ENCODE measurements at regions of chr1 and their contacts with region 1.

Region 1: GRCh38 chr1:145858894-145859490 is at the start of gene PIAS3:
- DNase-seq: peak; percentile 95
- H3K4me3 ChIP-seq: peak within 1 kb of the TSS; percentile 84
- H3K27ac ChIP-seq: peak within 1 kb of the TSS; percentile 68
- H3K4me1 ChIP-seq: peaks cover 13% of the 10 kb centered on the region
- CTCF ChIP-seq: no peak
- total RNA-seq, gene PIAS3: 7.8 and 9.4 TPM in 2 replicates

Region 2: DNA sequence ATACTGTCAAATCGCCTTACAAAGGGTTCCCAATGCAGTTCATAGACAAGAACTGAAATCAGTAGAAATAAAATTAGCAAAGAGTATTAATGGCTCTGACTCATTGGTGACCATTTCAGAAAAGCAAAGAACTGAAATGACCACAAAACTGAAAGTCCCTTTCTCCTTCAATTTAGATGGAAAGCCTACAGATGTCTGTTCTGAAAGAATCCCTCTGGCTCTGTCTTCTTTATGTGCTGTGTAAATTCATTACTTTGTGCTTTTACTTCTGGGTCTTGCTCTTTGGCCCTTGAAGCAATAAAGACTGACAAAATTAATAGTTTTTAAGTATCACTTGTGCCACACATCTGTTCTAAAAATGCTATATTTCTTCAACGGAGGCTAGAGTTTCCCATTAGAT is 313.9 kb before region 1 on chr1:
- CTCF ChIA-PET with region 1: no interaction called
- POLR2A ChIA-PET with region 1: no interaction called
- intact Hi-C with region 1: no loop called
- DNase-seq: no peak
- H3K4me3 ChIP-seq: no peak overlapping the region
- H3K27ac ChIP-seq: no peak overlapping the region
- H3K4me1 ChIP-seq: no peaks in the 10 kb centered on the region
- CTCF ChIP-seq: no peak

Region 3: GRCh38 chr1:145823565-145824498 is 35.2 kb before region 1 on chr1 and contains the starts of genes POLR3C and RNF115:
- CTCF ChIA-PET with region 1: no interaction called
- POLR2A ChIA-PET with region 1: interaction called, 32 read pairs
- intact Hi-C with region 1: loop called (anchors 1 kb)
- DNase-seq: peak; percentile 93
- H3K4me3 ChIP-seq: peak within 1 kb of the TSS; percentile 89
- H3K27ac ChIP-seq: peak within 1 kb of the TSS; percentile 66
- H3K4me1 ChIP-seq: peaks cover 36% of the 10 kb centered on the region
- CTCF ChIP-seq: 0 out of 2 replicates have a peak, but pooled peaks have one; percentile 11
- total RNA-seq, gene POLR3C: 48.9 and 57.1 TPM in 2 replicates
- total RNA-seq, gene RNF115: 14.7 and 14.8 TPM in 2 replicates

Region 4: DNA sequence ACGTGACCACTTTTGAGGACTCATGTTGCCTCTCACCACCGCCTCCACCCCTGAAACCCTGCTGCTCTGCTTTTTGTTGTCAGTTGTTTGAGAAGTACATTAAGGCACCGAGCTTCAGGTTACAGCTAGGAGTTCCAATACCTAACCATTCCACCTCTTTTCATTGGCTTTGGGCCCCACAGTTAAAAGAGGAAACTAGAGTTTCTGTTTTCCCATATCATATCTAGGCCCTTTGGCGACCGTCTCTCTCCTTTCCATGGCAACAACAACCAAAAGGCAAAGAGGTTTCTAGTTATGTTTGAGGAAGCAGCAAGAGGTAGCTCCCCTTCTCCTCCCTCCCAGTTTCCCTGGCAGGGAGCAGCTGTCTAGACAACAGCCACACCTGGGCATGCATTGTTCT is 20.8 kb after region 1 on chr1:
- CTCF ChIA-PET with region 1: interaction called, 4 read pairs
- POLR2A ChIA-PET with region 1: interaction called, 14 read pairs
- intact Hi-C with region 1: no loop called
- DNase-seq: no peak
- H3K4me3 ChIP-seq: no peak overlapping the region
- H3K27ac ChIP-seq: no peak overlapping the region
- H3K4me1 ChIP-seq: no peaks in the 10 kb centered on the region
- CTCF ChIP-seq: no peak

Region 5: DNA sequence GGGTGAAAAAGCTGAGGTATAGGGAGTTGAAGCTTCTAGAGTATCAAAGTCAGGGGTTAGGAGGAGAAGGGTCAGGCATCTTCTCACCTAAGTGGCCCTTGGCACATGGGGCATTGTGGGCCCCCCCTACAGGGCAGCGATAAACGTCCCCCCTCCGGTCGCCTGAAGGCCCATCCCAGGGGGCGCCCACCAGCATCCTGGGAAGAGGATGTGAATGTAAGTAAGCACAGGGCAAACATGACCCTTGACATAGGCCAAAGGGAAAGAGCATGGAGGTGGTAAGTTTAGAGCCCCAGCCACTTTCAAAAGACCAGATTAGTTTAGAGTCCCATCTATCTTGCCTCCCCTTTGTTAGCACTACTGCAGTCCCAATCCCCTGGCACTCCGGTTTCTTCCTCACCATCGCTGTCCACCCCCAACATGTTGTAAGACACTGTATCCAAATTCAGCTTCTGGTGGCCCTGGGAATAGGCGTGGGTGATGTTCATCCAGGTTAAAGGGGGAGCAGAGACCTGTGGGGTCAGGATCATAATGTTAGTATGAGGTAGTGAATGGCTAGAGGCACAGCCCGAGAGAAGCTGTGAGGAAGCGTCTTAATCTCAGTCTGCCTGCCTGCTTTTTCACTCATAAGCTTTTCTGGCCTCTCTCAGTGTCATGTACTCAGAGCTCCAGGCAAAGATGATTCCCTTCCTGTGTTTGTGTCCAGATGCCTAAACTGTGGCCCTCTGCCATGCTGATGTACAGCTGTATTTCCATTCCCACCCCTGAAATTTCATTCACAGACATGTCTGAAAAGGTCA is 48.2 kb after region 1 on chr1:
- CTCF ChIA-PET with region 1: no interaction called
- POLR2A ChIA-PET with region 1: no interaction called
- intact Hi-C with region 1: loop called (anchors 2 kb)
- DNase-seq: no peak
- H3K4me3 ChIP-seq: no peak overlapping the region
- H3K27ac ChIP-seq: no peak overlapping the region
- H3K4me1 ChIP-seq: peaks cover under 1% of the 10 kb centered on the region
- CTCF ChIP-seq: no peak

Region 6: GRCh38 chr1:145957443-145958319 is 98.7 kb after region 1 on chr1 and contains the start of gene LIX1L:
- CTCF ChIA-PET with region 1: interaction called, 4 read pairs
- POLR2A ChIA-PET with region 1: interaction called, 9 read pairs
- intact Hi-C with region 1: loop called (anchors 2 kb)
- DNase-seq: peak; percentile 98
- H3K4me3 ChIP-seq: peak within 1 kb of the TSS; percentile 86
- H3K27ac ChIP-seq: peak within 1 kb of the TSS; percentile 53
- H3K4me1 ChIP-seq: peaks cover 63% of the 10 kb centered on the region
- CTCF ChIP-seq: no peak
- total RNA-seq, gene LIX1L: 10.2 and 11.6 TPM in 2 replicates

Region 7: GRCh38 chr1:145978854-145979759 is 120.1 kb after region 1 on chr1:
- CTCF ChIA-PET with region 1: interaction called, 26 read pairs
- POLR2A ChIA-PET with region 1: interaction called, 4 read pairs
- intact Hi-C with region 1: no loop called
- DNase-seq: peak; percentile 98
- H3K4me3 ChIP-seq: peak overlapping the region; percentile 36
- H3K27ac ChIP-seq: peak overlapping the region; percentile 94
- H3K4me1 ChIP-seq: peaks cover 68% of the 10 kb centered on the region
- CTCF ChIP-seq: peak; percentile 70